Right ventricle myocardium inferior (tissue), 1 donor: ENCODE measurements at regions of chr1 and their contacts with region 1.

Region 1: GRCh38 chr1:108746372-108747205 is at the start of gene STXBP3:
- DNase-seq: peak; percentile 100
- ATAC-seq: peak; percentile 97
- total RNA-seq, gene STXBP3: 24.1 TPM

Region 2: GRCh38 chr1:108691942-108692723 is 54.5 kb before region 1 on chr1 and contains the start of gene PRPF38B:
- intact Hi-C with region 1: loop called (anchors 1 kb)
- DNase-seq: peak; percentile 98
- ATAC-seq: peak; percentile 98
- total RNA-seq, gene PRPF38B: 16.9 TPM

Region 3: GRCh38 chr1:108703939-108704900 is 42.4 kb before region 1 on chr1:
- intact Hi-C with region 1: no loop called
- DNase-seq: no peak
- ATAC-seq: no peak